Left ventricle myocardium superior (tissue), 1 donor: ENCODE measurements at regions of chr21 and their contacts with region 1.

Region 1: GRCh38 chr21:14864211-14865021 is 200.4 kb downstream of the NRIP1 start:
- DNase-seq: peak; percentile 78
- ATAC-seq: peak; percentile 94

Region 2: DNA sequence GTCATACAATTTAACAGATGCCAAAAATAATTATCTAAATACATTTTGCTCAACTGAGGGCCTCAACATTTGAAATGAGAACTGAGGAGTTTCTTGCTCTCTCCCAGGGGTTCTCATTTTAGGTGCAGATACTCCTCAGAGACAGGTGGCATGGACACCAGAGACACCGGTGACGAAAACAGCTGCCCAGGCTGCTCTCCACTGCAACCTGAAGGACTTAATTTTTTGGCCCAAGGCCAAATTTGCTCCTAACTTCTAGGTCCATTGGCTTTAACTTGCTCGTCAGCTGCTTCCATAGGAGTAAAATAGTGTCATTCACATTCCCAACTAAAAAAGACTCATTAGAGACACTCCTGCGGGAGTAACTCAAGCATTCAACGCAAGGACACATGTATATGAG is 113.4 kb after region 1 on chr21:
- intact Hi-C with region 1: no loop called
- DNase-seq: no peak
- ATAC-seq: no peak

Region 3: DNA sequence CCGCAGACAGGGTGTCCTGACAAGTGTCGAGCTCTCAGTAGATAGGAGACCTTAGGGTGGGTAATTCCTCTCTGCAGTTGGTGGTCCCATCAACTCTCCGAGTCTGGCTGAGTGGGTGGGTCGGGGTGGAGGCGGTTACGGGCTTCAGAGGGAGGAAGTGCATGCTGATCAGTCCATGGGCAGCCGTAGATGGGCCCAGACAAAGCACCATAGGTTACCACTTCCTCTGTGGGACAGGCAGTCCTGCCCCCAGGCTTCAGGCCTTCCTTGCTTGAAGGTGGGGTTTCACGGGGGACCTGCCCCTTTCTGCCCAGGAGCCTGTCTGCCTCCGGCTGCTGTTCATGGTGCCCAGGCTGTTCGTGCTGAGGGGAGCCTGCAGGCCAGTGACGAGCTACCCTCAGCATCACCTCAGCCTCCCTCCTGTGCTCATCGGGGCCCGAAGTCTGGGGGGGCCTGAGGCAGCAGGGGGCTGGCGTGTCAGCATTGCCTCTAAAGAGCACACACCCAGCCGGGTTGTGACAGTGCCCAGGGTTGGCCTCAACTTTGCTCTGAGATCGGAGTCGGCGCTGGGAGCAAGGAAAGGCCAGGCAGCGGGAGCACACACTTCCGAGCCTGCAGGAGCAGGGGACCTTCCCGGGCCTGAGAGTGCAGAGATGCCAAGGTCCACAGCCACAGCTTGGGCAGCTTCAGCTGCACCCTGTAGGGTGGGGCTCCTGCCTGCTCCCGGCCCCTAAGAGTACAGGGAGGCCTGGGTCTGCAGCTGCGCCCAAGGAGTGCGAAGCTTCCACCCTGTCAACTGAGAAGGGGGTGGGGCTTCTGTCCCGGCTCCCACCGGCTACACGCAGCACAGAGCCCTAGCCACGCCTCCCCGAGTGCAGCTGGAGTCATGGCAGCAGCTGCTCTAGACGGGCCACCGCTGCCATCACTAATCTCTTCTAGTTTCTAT is 425.8 kb after region 1 on chr21:
- intact Hi-C with region 1: no loop called
- DNase-seq: peak; percentile 51
- ATAC-seq: peak; percentile 58

Region 4: GRCh38 chr21:15483138-15483780 is 618.8 kb after region 1 on chr21:
- intact Hi-C with region 1: loop called (anchors 5 kb)
- DNase-seq: peak; percentile 86
- ATAC-seq: peak; percentile 100